Activated naive CD4-positive, alpha-beta T cell treated with anti-CD3 and anti-CD28 coated beads for 36 hours (primary cell): ENCODE measurements at regions of chr13 and their contacts with region 1.

Region 1: GRCh38 chr13:50365408-50366391 is 350.5 kb downstream of the KCNRG start:
- DNase-seq: peak; percentile 62
- H3K4me3 Mint-ChIP-seq: no peak overlapping the region
- H3K27ac Mint-ChIP-seq: no peak overlapping the region
- H3K4me1 Mint-ChIP-seq: peaks cover 38% of the 10 kb centered on the region
- H3K27me3 Mint-ChIP-seq: peaks cover 12% of the 10 kb centered on the region

Region 2: DNA sequence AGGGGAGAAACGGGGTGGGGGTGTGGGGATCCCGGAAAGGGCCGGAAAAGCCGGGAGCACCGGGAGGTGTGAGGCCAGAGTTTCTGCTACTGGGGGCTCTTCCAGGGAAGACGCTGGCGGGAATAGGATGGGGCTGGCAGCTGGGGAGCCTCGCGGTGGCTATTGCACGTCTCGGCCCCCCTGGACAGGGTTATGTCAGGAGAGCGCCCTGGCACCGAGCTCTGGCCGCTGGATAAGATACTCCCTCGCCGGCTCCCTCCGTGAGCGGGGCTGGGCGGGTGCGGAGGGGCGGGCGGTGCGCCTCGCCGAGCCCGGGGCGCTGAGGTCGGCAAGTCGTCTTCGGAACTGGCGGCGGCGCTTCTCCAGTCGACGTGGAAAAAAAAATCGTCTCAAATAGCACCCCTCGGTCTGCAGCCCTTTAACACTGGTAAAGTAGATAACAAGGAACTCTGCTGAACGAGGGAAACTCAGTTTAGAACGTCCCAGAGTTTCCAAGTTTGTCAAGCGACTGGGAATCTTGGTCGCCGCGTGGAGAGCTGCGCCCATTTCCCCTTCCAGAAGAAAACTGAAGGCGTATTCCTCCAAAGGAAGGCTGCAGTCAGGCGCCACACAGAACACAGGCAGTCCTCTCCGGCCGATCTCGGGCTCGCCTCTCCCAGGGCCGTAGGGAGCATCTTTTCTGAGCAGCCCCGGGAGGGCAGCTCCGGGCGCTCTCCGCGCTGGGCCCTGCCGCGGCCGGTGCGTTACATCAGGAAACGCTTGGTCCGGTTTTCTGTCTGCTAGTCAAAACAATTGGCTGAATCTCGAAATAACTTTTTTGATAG is 235.4 kb before region 1 on chr13:
- CTCF ChIA-PET with region 1: no interaction called
- intact Hi-C with region 1: loop called (anchors 2 kb)
- DNase-seq: peak; percentile 24
- H3K4me3 Mint-ChIP-seq: peak overlapping the region; percentile 66
- H3K27ac Mint-ChIP-seq: peak overlapping the region; percentile 50
- H3K4me1 Mint-ChIP-seq: peaks cover 62% of the 10 kb centered on the region
- H3K27me3 Mint-ChIP-seq: peaks cover 60% of the 10 kb centered on the region

Region 3: DNA sequence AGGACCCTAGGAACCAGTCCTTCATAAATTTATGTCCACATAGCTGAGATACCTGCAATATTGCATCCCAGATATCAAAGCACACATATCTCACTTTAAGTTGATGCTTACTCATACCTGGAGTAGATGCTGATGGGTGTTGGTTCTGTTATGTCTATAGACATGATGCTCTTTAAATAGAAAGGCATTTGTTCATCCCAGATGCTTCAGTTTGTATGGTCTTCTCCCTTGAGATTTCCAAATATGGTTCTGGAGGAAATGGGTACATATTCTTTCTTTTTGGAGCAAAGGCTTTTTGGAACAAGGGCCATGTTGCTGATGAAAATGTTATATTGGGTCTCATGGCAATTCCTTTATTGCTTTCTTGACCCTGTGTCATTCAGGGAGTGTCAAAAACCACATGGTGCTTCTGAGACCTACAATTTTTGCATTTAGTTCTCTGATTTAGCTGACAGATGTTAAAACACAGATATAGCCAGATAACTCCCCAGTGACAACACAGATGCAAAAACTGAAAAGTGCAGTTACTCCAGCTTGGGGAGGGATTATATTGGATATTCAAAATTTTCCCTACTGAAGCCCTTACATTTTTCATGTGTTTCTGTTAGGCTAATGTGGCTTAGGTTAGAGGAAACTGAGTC is 139.1 kb before region 1 on chr13:
- CTCF ChIA-PET with region 1: no interaction called
- intact Hi-C with region 1: loop called (anchors 2 kb)
- DNase-seq: no peak
- H3K4me3 Mint-ChIP-seq: no peak overlapping the region
- H3K27ac Mint-ChIP-seq: no peak overlapping the region
- H3K4me1 Mint-ChIP-seq: peaks cover 54% of the 10 kb centered on the region
- H3K27me3 Mint-ChIP-seq: peaks cover 15% of the 10 kb centered on the region

Region 4: GRCh38 chr13:50236898-50237318 is 128.8 kb before region 1 on chr13:
- CTCF ChIA-PET with region 1: no interaction called
- intact Hi-C with region 1: loop called (anchors 1 kb)
- DNase-seq: peak; percentile 62
- H3K4me3 Mint-ChIP-seq: no peak overlapping the region
- H3K27ac Mint-ChIP-seq: peak overlapping the region; percentile 61
- H3K4me1 Mint-ChIP-seq: peaks cover 48% of the 10 kb centered on the region
- H3K27me3 Mint-ChIP-seq: peaks cover 12% of the 10 kb centered on the region

Region 5: GRCh38 chr13:50244713-50245574 is 120.8 kb before region 1 on chr13:
- CTCF ChIA-PET with region 1: no interaction called
- intact Hi-C with region 1: loop called (anchors 2 kb)
- DNase-seq: peak; percentile 84
- H3K4me3 Mint-ChIP-seq: no peak overlapping the region
- H3K27ac Mint-ChIP-seq: peak overlapping the region; percentile 72
- H3K4me1 Mint-ChIP-seq: peaks cover 30% of the 10 kb centered on the region
- H3K27me3 Mint-ChIP-seq: peaks cover 13% of the 10 kb centered on the region

Region 6: DNA sequence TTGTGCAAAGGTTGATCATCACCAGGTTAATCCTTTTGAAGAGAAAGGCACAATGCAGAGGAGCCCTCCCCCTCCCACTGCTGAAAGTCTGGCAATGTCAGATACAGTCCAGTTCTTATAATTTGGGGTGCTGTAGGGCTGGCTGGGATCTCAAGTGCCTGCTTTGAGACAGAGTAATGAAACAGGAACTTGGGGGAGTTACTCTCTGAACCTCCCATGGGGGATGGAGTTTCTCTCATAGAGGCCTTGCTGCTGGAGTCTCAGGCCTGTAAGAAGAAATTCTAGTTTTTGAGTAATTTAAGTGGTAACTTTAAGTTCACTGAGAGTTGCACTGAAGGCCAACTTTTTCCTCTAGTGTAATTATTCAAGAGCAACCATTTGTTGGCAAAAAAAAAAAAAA is 60.1 kb after region 1 on chr13:
- CTCF ChIA-PET with region 1: no interaction called
- intact Hi-C with region 1: loop called (anchors 1 kb)
- DNase-seq: no peak
- H3K4me3 Mint-ChIP-seq: no peak overlapping the region
- H3K27ac Mint-ChIP-seq: no peak overlapping the region
- H3K4me1 Mint-ChIP-seq: peaks cover 23% of the 10 kb centered on the region
- H3K27me3 Mint-ChIP-seq: no peaks in the 10 kb centered on the region

Region 7: DNA sequence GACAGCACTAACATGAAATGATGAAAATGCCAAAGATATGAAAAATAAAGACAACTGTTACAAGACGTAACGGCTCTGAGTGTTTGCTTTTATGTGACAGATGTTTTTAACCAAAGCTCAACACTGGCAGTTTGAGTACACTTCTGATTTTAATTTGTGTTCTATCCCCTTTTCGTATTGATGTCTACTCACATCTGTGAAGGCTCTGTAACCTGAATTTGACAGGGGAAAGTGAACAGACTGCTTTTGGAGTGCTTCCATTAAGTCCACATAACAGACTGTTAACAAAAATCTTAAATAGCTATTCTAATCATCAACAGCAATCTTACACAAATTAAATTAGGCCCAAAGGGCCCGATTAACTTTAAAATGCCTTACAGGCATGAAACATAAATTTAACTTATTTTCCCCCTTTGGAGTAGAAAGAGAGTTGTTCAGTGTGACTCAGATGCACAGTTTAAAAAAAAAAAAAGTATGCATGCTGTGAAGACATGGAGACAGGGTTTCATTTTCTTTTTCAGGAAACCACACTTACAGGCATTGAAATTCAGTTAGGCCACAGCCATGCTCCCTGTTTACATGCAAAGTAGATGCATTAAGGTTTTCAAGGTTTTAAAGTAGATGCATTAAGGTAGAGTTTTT is 527.6 kb after region 1 on chr13:
- CTCF ChIA-PET with region 1: no interaction called
- intact Hi-C with region 1: loop called (anchors 2 kb)
- DNase-seq: peak; percentile 41
- H3K4me3 Mint-ChIP-seq: peak overlapping the region; percentile 36
- H3K27ac Mint-ChIP-seq: peak overlapping the region; percentile 79
- H3K4me1 Mint-ChIP-seq: peaks cover 38% of the 10 kb centered on the region
- H3K27me3 Mint-ChIP-seq: no peaks in the 10 kb centered on the region